Activated CD4-positive, alpha-beta memory T cell treated with anti-CD3 and anti-CD28 coated beads, Interleukin-2, amount 10 ng/mL, durations not matched to agents 7 days and 5 days (primary cell): ENCODE measurements at regions of chr1 and their contacts with region 1.

Region 1: GRCh38 chr1:156421062-156421938 is 52.3 kb downstream of the RHBG start:
- DNase-seq: peak; percentile 79
- H3K4me3 Mint-ChIP-seq: peak overlapping the region; percentile 81
- H3K27ac Mint-ChIP-seq: no peak overlapping the region
- H3K4me1 Mint-ChIP-seq: peaks cover 20% of the 10 kb centered on the region
- H3K27me3 Mint-ChIP-seq: peaks cover 88% of the 10 kb centered on the region

Region 2: DNA sequence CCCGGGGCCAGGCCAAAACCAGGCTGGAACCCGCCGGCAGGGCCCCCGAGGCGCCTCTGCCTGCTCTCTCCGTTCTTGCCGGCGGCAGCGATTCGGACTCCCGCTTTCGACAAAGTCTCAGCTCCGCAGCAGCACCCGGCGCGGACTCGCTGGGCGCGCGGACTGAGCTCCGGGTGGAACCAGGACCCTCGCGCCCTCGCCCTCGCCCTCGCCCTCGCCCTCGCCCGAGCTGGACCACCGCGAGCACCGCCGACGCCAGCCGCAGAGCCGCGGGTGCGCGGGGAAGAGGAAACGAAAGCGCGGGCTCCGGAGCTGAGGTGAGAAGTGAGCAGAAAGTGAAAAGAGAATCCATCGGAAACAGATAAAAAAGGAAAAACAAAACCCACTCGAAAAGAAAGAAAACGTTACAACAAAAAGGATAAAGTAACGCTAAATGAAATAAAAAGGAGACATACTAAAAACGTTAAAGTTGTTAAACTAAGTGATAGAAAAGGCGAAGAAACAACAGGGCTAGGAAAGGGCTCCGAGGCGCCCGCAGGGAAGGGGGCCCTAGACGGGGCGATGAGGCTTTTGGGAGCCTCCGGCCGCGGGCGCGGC is 14.3 kb after region 1 on chr1:
- CTCF ChIA-PET with region 1: interaction called, 3 read pairs
- POLR2A ChIA-PET with region 1: interaction called, 15 read pairs
- DNase-seq: peak; percentile 39
- H3K4me3 Mint-ChIP-seq: peak overlapping the region; percentile 65
- H3K27ac Mint-ChIP-seq: no peak overlapping the region
- H3K4me1 Mint-ChIP-seq: peaks cover 27% of the 10 kb centered on the region
- H3K27me3 Mint-ChIP-seq: peaks cover 88% of the 10 kb centered on the region

Region 3: GRCh38 chr1:156540791-156541383 is 119.6 kb after region 1 on chr1:
- CTCF ChIA-PET with region 1: no interaction called
- POLR2A ChIA-PET with region 1: no interaction called
- DNase-seq: no peak
- H3K4me3 Mint-ChIP-seq: no peak overlapping the region
- H3K27ac Mint-ChIP-seq: no peak overlapping the region
- H3K4me1 Mint-ChIP-seq: peaks cover 6% of the 10 kb centered on the region
- H3K27me3 Mint-ChIP-seq: no peaks in the 10 kb centered on the region